Activated naive CD4-positive, alpha-beta T cell treated with anti-CD3 and anti-CD28 coated beads for 36 hours (primary cell): ENCODE measurements at regions of chr17 and their contacts with region 1.

Region 1: GRCh38 chr17:75779231-75779986 is 5.2 kb upstream of the UNK start:
- DNase-seq: peak; percentile 97
- H3K4me3 Mint-ChIP-seq: peak overlapping the region; percentile 91
- H3K27ac Mint-ChIP-seq: peak overlapping the region; percentile 99
- H3K4me1 Mint-ChIP-seq: peaks cover 54% of the 10 kb centered on the region
- H3K27me3 Mint-ChIP-seq: peaks cover 3% of the 10 kb centered on the region

Region 2: DNA sequence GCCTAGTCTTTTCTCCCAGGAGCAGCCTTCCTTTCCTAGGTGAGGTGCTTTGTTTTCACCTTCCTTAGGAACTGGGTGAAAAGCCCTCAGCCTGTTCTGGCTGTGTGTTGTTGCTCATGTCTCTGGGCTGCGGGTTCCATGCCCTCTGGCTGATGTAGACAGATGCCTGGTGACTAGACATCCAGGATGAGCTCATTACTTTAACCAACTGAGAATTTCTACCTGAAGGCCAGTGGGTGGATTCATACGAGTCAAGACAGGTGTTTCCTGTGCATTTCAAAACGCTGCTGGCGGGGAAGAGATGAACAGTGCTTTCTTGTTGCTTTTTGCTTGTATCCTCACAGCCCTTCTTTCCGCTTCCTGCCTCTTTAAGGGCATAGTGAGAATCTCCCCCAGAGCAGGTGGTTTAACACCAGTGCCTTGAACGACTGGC is 90.0 kb before region 1 on chr17:
- CTCF ChIA-PET with region 1: no interaction called
- intact Hi-C with region 1: loop called (anchors 1 kb)
- DNase-seq: peak; percentile 81
- H3K4me3 Mint-ChIP-seq: no peak overlapping the region
- H3K27ac Mint-ChIP-seq: peak overlapping the region; percentile 92
- H3K4me1 Mint-ChIP-seq: peaks cover 59% of the 10 kb centered on the region
- H3K27me3 Mint-ChIP-seq: no peaks in the 10 kb centered on the region

Region 3: GRCh38 chr17:75764711-75765421 is 14.5 kb before region 1 on chr17 and contains the start of gene GALK1:
- CTCF ChIA-PET with region 1: interaction called, 30 read pairs
- intact Hi-C with region 1: loop called (anchors 1 kb)
- DNase-seq: peak; percentile 82
- H3K4me3 Mint-ChIP-seq: peak within 1 kb of the TSS; percentile 84
- H3K27ac Mint-ChIP-seq: peak within 1 kb of the TSS; percentile 79
- H3K4me1 Mint-ChIP-seq: peaks cover 10% of the 10 kb centered on the region
- H3K27me3 Mint-ChIP-seq: no peaks in the 10 kb centered on the region
- total RNA-seq, gene GALK1: 48.7 to 50.2 TPM

Region 4: DNA sequence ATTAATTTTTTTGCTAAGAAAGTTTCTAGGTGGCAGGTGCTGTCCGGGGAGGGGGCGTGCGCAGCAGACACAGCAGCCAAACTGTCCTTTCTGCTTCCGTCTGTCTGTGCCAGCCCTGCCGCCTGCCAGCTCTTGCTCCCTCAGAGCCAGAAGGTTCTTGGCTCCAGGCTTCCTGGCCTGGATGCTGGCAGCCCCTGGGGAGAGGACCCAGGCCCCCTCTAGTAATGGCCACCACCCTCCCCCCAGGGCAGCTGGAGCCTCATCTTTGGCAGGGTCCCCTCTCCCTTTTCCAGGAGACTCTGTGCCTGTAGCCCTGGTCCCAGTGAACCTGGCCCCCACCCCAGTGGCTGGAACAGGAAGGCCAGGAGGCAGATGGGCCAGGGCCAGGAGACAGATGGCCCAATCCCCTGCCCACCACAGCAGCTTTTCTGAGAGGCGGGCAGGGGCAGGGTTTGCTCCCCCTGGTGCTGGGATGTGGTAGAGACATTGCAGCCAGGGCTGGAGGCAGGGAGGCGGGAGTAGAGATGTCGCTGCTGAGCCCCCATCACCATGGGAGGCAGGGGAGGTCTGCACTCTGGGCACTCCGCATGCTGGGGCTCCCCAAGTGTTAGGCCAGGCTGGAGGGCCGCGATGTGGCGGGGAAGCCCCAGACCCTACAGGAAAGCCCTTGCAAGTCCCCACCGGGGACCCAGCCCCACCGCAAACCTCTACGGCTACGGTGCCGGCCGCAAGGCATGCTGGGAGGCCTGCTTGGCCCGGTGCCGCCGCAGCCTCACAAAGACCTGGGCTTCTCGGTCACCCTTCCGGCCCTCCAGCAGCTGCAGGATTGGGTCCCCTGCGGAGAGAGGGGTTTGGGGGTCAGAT is 48.1 kb after region 1 on chr17:
- CTCF ChIA-PET with region 1: interaction called, 7 read pairs
- intact Hi-C with region 1: loop called (anchors 2 kb)
- DNase-seq: peak; percentile 75
- H3K4me3 Mint-ChIP-seq: peak overlapping the region; percentile 29
- H3K27ac Mint-ChIP-seq: peak overlapping the region; percentile 80
- H3K4me1 Mint-ChIP-seq: peaks cover 18% of the 10 kb centered on the region
- H3K27me3 Mint-ChIP-seq: no peaks in the 10 kb centered on the region

Region 5: DNA sequence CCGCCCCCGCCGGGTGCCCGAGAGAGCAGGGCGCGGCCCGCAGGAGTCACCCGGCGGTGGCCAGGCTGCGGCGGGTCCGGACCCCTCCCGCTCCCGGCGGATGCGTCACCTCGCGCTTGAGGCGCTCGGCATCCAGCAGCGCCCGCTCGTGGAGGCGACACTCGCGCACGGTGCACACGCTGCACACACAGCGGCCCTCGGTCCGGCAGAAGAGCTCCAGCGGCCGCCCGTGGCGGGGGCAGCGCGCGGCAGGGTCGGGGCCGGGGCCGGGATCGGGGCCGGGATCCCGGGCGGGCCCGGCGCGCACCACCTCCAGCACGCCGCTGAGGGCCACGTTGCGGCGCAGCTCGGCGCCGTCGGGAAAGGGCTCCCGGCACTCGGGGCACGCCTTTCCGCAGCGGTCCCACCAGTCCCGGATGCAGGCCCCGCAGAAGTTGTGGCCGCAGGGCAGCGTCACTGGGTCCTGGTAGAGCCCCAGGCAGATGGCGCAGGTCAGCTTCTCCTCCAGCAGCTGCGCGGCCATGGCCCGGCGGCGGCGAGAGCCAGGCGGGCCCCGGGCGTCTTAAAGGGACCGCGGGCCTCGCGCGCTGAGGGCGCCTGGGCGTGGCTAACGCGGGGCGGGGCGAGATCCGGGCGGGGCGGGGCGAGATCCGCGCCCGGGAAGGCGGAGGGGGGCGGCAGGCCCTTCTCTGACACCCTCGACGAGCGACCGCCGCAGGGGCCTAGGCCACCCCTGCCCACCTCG is 117.2 kb after region 1 on chr17 and contains the start of gene TRIM65:
- CTCF ChIA-PET with region 1: no interaction called
- intact Hi-C with region 1: loop called (anchors 5 kb)
- DNase-seq: peak; percentile 83
- H3K4me3 Mint-ChIP-seq: peak within 1 kb of the TSS; percentile 79
- H3K27ac Mint-ChIP-seq: peak within 1 kb of the TSS; percentile 59
- H3K4me1 Mint-ChIP-seq: peaks cover 28% of the 10 kb centered on the region
- H3K27me3 Mint-ChIP-seq: no peaks in the 10 kb centered on the region
- total RNA-seq, gene TRIM65: 24.5 to 25.5 TPM

Region 6: GRCh38 chr17:76072148-76072858 is 292.9 kb after region 1 on chr17 and contains the start of gene SRP68:
- CTCF ChIA-PET with region 1: no interaction called
- intact Hi-C with region 1: loop called (anchors 5 kb)
- DNase-seq: peak; percentile 86
- H3K4me3 Mint-ChIP-seq: peak within 1 kb of the TSS; percentile 95
- H3K27ac Mint-ChIP-seq: peak within 1 kb of the TSS; percentile 98
- H3K4me1 Mint-ChIP-seq: peaks cover 49% of the 10 kb centered on the region
- H3K27me3 Mint-ChIP-seq: peaks cover 33% of the 10 kb centered on the region
- total RNA-seq, gene SRP68: 127 to 131 TPM